HEK293 (cell line): ENCODE measurements at regions of chr10 and their contacts with region 1.

Region 1: GRCh38 chr10:56360967-56361612 is at the start of gene ZWINT:
- H3K4me3 ChIP-seq: peak within 1 kb of the TSS; percentile 98
- H3K27ac ChIP-seq: peak within 1 kb of the TSS; percentile 61; the same call in 1 of the 2 replicates
- H3K4me1 ChIP-seq: no peaks in the 10 kb centered on the region; the same call in 1 of the 2 replicates
- CTCF ChIP-seq: no peak

Region 2: GRCh38 chr10:55813451-55814170 is 547.5 kb before region 1 on chr10:
- CTCF ChIA-PET with region 1: no interaction called
- POLR2A ChIA-PET with region 1: no interaction called
- H3K4me3 ChIP-seq: no peak overlapping the region
- H3K27ac ChIP-seq: no peak overlapping the region
- H3K4me1 ChIP-seq: no peaks in the 10 kb centered on the region
- CTCF ChIP-seq: no peak

Region 3: GRCh38 chr10:56349611-56350010 is 11.5 kb before region 1 on chr10:
- CTCF ChIA-PET with region 1: interaction called, 5 read pairs
- POLR2A ChIA-PET with region 1: interaction called, 28 read pairs
- H3K4me3 ChIP-seq: no peak overlapping the region
- H3K27ac ChIP-seq: no peak overlapping the region
- H3K4me1 ChIP-seq: no peaks in the 10 kb centered on the region
- CTCF ChIP-seq: no peak